Testis (tissue), 5 donors: ENCODE measurements at regions of chr20 and their contacts with region 1.

Region 1: GRCh38 chr20:52312132-52312729 is 120.7 kb upstream of the ZFP64 start:
- DNase-seq: peak; percentile 61
- H3K4me3 ChIP-seq: no peak overlapping the region
- H3K27ac ChIP-seq: no peak overlapping the region
- H3K4me1 ChIP-seq: no peaks in the 10 kb centered on the region
- H3K27me3 ChIP-seq: no peaks in the 10 kb centered on the region
- CTCF ChIP-seq: peak; percentile 56 to 74 (median 69)
- POLR2A ChIP-seq: no peak

Region 2: DNA sequence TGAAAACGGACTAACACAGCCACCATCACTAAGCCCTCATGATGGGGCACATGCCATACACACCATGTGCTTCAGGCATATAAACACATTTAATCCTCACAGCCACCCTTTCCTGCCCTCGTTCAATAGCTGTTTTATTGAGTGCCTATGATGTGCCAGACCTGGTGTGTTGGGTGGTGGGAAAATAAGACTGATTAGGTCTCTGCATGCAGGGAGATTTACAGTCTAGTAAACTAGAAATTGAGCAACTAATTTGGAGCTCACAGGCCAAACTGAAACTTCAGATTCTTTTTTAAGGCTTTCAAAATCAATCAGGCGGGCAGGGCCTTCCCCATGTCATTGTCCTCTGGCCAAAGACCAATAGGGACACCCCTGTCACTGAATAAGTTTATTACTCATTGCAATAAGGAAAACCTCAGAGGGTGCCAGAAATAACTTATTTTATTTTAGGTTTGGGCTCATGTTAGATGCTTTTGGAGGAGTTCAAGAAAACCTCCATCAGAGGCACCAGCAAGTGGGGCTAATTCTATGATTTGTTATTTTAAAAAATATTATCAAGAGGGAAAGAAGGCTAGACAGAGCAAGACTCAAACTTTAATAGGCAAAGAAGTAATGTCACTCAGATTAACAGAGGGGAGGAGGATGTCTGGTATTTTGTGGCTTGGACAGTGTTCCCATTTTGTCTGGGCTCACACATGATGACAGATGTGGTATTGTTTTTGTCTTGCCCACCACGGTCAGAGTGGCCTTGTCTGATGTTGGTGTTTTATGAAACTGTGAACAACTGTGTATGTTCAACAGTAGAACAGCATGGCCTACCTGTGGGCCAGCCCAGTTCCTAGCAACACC is 132.7 kb before region 1 on chr20:
- intact Hi-C with region 1: no loop called
- DNase-seq: no peak
- H3K4me3 ChIP-seq: no peak overlapping the region
- H3K27ac ChIP-seq: no peak overlapping the region
- H3K4me1 ChIP-seq: no peaks in the 10 kb centered on the region
- H3K27me3 ChIP-seq: no peaks in the 10 kb centered on the region
- CTCF ChIP-seq: no peak
- POLR2A ChIP-seq: no peak

Region 3: GRCh38 chr20:52230409-52230808 is 81.8 kb before region 1 on chr20:
- intact Hi-C with region 1: no loop called
- DNase-seq: no peak
- H3K4me3 ChIP-seq: no peak overlapping the region
- H3K27ac ChIP-seq: no peak overlapping the region
- H3K4me1 ChIP-seq: no peaks in the 10 kb centered on the region
- H3K27me3 ChIP-seq: no peaks in the 10 kb centered on the region
- CTCF ChIP-seq: no peak
- POLR2A ChIP-seq: no peak

Region 4: GRCh38 chr20:53547664-53548239 is 1235.5 kb after region 1 on chr20:
- intact Hi-C with region 1: loop called (anchors 5 kb)
- DNase-seq: peak; percentile 47
- H3K4me3 ChIP-seq: no peak overlapping the region
- H3K27ac ChIP-seq: no peak overlapping the region
- H3K4me1 ChIP-seq: peaks cover 4% of the 10 kb centered on the region
- H3K27me3 ChIP-seq: no peaks in the 10 kb centered on the region
- CTCF ChIP-seq: peak; percentile 71 to 88 (median 75)
- POLR2A ChIP-seq: no peak